ENCODE measurements at regions of chr20 and their contacts with region 1.

Region 1: GRCh38 chr20:44460795-44461141 is 14.9 kb upstream of the TTPAL start:
- DNase-seq: no peak
- ATAC-seq: peak; percentile 78
- H3K4me3 ChIP-seq: no peak overlapping the region
- H3K27ac ChIP-seq: no peak overlapping the region
- H3K4me1 ChIP-seq: no peaks in the 10 kb centered on the region
- H3K27me3 ChIP-seq: no peaks in the 10 kb centered on the region
- CTCF ChIP-seq: peak; percentile 78; the same call in 1 of the 2 replicates

Region 2: GRCh38 chr20:44310664-44311639 is 149.8 kb before region 1 on chr20 and contains the start of gene FITM2:
- CTCF ChIA-PET with region 1: interaction called, 3 read pairs
- POLR2A ChIA-PET with region 1: no interaction called
- in situ Hi-C with region 1: no loop called
- intact Hi-C with region 1: loop called (anchors 10 kb)
- DNase-seq: peak; percentile 78
- ATAC-seq: peak; percentile 99
- H3K4me3 ChIP-seq: peak within 1 kb of the TSS; percentile 85 to 96
- H3K27ac ChIP-seq: peak within 1 kb of the TSS; percentile 77
- H3K4me1 ChIP-seq: peaks cover 6% of the 10 kb centered on the region; the same call in 1 of the 2 replicates
- H3K27me3 ChIP-seq: no peaks in the 10 kb centered on the region
- CTCF ChIP-seq: peak; percentile 99
- total RNA-seq, gene FITM2: 10.5 TPM

Region 3: DNA sequence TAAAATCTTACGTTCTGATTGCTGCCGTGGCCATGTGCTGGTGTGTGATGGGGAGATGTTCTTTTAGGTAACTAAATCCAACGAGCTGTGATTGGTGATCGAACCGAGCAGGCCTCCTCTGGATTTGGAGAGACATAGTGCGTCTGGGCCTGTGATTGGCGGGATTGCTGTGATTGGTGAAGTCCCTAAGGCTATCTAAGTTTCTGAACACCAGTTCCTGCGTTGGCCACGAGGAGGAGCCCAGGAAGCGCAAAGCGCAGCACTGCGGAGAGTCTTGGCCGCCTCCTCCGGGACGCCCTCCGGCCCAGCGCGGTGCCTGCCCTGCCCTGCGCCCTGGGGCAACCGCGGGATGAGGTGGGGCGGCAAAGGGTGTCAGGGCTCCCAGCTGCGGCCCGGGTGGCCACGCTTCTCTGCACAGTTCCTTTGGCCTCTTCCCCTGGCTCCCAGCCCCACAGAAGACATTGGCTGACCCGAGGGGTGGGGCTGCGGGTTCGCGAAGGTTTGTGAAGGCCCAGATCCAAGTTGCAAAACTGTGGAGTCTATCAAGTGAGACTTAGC is 72.2 kb before region 1 on chr20:
- CTCF ChIA-PET with region 1: interaction called, 5 read pairs
- POLR2A ChIA-PET with region 1: no interaction called
- in situ Hi-C with region 1: loop called (anchors 10 kb)
- intact Hi-C with region 1: loop called (anchors 1 kb)
- DNase-seq: peak; percentile 62
- ATAC-seq: peak; percentile 86
- H3K4me3 ChIP-seq: 0 out of 4 replicates have a peak overlapping the region, but pooled peaks of 1 of the 2 experiments have one; percentile 9
- H3K27ac ChIP-seq: no peak overlapping the region
- H3K4me1 ChIP-seq: peaks cover 10% of the 10 kb centered on the region; the same call in 1 of the 2 replicates
- H3K27me3 ChIP-seq: no peaks in the 10 kb centered on the region
- CTCF ChIP-seq: peak; percentile 92

Measured in Panc1 (cell line).